ENCODE measurements at regions of chr3 and their contacts with region 1.

Region 1: GRCh38 chr3:194134757-194135528 is 1.0 kb upstream of the HES1 start:
- DNase-seq: peak; percentile 95 to 97 (median 96)
- ATAC-seq: peak; percentile 62 to 72 (median 68)
- H3K4me3 ChIP-seq: peak overlapping the region; percentile 16 to 72 (median 46)
- H3K27ac ChIP-seq: peak overlapping the region; percentile 95 to 98 (median 96)
- H3K4me1 ChIP-seq: peaks cover 15 to 29% (median 29%) of the 10 kb centered on the region in 3 donors
- H3K27me3 ChIP-seq: no peaks in the 10 kb centered on the region
- CTCF ChIP-seq: no peak

Region 2: DNA sequence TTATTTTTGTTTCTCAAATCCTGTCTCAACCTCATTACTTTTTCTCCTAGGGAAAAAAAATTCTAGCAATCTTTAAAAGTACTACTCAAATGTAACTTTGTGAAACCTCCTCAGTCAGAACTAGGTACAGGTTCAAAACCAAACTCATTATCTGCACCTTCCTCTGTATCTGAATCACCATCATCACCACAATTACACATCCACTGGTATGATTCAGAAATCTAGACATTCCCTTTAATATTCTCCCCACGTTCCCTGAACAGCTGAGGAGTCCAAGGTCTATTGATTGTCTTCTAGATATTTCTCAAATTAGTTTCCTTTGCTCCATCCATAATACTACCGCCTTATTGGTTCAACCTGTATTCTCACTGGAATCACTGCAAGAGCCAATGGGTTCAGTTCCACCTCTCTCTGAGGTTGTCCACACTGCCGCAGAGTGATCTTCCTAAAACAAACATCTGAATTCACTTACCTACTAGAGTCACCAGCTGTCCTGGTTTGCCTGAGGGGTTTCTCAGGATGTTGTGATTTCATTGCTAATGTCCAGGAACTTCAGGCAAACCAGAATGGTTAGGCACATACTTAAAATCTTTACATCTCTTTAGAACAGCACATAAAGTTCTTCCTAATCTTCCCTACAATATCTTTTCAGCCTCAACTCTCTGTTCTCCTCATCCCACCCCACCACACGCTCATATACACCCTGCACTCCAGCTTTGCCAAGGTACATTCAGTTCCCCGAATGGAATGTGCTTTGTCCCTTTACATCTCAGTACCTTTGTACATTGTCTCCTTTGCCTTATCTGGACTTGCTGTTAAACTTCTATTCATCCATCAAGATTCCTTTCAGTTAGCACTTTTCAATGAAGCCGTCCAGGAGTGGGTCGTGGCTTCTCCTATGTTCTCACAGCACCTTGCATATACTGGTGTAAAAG is 604.4 kb before region 1 on chr3:
- intact Hi-C with region 1: no loop called
- DNase-seq: no peak
- ATAC-seq: no peak
- H3K4me3 ChIP-seq: no peak overlapping the region
- H3K27ac ChIP-seq: no peak overlapping the region
- H3K4me1 ChIP-seq: no peaks in the 10 kb centered on the region
- H3K27me3 ChIP-seq: no peaks in the 10 kb centered on the region
- CTCF ChIP-seq: no peak

Region 3: GRCh38 chr3:193780810-193781472 is 354.0 kb before region 1 on chr3:
- intact Hi-C with region 1: loop called in 2 of 3 experiments (anchors 5 to 10 kb)
- DNase-seq: peak; percentile 53 to 82 (median 73)
- ATAC-seq: peak; percentile 82 to 94 (median 94)
- H3K4me3 ChIP-seq: no peak overlapping the region
- H3K27ac ChIP-seq: no peak overlapping the region
- H3K4me1 ChIP-seq: no peaks in the 10 kb centered on the region
- H3K27me3 ChIP-seq: no peaks in the 10 kb centered on the region
- CTCF ChIP-seq: peak; percentile 21 to 61 (median 60)

Region 4: GRCh38 chr3:193788189-193788991 is 346.6 kb before region 1 on chr3:
- intact Hi-C with region 1: loop called in 2 of 3 experiments (anchors 5 to 10 kb)
- DNase-seq: peak; percentile 47 to 73 (median 66)
- ATAC-seq: peak; percentile 78 to 95 (median 92)
- H3K4me3 ChIP-seq: no peak overlapping the region
- H3K27ac ChIP-seq: no peak overlapping the region
- H3K4me1 ChIP-seq: peaks cover 16 to 27% (median 23%) of the 10 kb centered on the region in 3 donors
- H3K27me3 ChIP-seq: no peaks in the 10 kb centered on the region
- CTCF ChIP-seq: peak; percentile 57 to 78 (median 65)

Region 5: DNA sequence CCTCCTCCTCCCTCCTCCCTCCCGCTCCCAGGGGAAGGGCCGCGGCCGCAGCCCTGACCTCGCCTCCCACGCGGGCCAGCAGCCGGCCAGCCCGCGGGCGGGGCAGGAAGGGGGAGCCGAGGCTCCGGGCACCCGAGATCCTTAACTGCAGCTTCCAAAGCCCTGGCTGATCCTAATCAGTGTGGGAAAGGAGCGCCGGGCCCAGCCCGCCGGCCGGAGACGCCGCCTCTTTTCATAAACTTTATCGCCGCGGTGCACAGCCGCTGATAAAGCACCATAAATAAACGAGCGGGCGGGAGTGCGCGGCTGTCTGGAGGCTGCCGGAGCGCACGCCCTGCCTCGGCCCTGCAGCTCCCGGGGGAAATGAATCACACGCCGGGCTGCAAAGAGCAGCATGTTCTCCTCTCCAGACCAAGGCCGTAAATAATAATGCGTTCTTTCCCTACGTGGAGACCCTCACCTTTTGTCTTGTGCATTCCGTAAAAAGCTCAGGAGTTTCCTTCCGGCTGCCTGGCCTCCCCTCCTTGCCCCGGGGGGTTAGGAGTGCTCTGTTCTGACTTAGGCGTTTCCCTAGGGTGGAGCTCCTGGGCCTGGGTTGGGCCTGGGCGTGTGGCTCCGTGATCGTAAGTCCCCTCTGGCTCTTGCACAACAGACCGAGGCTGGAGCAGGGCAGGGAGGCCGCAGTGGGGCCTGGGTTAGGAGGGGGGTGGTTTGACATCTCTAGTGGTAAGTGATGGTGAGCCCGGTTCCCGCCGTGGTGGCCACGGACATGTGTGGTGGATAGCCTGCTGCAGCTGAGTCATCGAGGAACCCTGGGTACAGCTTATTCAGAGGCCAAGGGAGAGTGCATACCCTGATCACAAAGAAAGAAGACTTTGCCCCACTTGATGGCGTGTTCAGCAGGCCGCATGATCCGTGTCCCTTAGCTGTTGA is 131.6 kb before region 1 on chr3:
- intact Hi-C with region 1: loop called in 1 of 3 experiments (anchors 10 kb)
- DNase-seq: peak; percentile 82 to 88 (median 85)
- ATAC-seq: peak; percentile 85 to 91 (median 87)
- H3K4me3 ChIP-seq: peak overlapping the region in 3 of 4 donors; percentile 6 to 42 (median 30)
- H3K27ac ChIP-seq: peak overlapping the region; percentile 66 to 86 (median 70)
- H3K4me1 ChIP-seq: peaks cover 19 to 25% (median 22%) of the 10 kb centered on the region in 3 donors
- H3K27me3 ChIP-seq: no peaks in the 10 kb centered on the region
- CTCF ChIP-seq: no peak

Region 6: DNA sequence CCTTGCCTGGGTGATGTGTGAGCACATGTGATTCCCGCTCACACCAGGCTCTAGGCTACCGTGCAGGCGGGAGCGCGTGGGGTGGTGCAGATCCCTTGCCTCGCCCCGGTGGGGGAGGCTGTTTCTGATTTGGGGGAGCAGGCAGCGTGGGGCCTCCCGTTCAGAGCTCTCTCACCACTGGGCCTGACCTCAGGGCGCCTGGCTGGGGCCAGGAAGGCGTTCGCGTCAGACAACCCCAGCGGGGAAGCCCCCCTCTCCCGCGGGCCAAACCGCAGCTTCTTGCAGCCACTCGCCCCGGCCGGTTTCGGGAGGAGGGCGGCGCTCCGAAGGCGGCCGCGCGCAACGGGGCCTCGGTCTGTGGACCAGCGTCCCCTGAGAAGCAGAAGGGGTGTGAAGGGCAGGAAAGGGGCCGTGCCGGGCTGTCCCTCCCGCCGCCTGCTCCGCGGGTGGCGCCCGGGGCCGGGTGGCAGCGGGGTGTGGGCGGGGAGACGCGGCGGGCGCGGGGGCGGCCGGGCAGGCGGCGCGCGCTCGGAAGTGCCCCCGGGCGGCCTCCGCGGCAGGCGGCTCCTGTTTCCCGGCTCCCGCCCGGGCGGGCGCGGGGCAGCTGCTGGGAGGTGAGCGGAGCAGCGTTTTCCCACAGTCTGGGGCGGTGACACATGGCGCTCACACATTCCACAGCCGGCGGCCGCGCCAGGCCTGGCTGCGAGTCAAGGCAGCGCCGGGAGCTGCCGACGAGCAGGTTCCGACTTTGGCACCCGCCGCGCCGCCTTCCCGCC is 64.1 kb before region 1 on chr3:
- intact Hi-C with region 1: loop called in 1 of 3 experiments (anchors 10 kb)
- DNase-seq: peak; percentile 89 to 96 (median 95)
- ATAC-seq: peak; percentile 84 to 88 (median 85)
- H3K4me3 ChIP-seq: peak overlapping the region; percentile 25 to 47 (median 34)
- H3K27ac ChIP-seq: peak overlapping the region; percentile 89 to 99 (median 94)
- H3K4me1 ChIP-seq: peaks cover 20 to 25% (median 21%) of the 10 kb centered on the region in 3 donors
- H3K27me3 ChIP-seq: no peaks in the 10 kb centered on the region
- CTCF ChIP-seq: no peak

Region 7: DNA sequence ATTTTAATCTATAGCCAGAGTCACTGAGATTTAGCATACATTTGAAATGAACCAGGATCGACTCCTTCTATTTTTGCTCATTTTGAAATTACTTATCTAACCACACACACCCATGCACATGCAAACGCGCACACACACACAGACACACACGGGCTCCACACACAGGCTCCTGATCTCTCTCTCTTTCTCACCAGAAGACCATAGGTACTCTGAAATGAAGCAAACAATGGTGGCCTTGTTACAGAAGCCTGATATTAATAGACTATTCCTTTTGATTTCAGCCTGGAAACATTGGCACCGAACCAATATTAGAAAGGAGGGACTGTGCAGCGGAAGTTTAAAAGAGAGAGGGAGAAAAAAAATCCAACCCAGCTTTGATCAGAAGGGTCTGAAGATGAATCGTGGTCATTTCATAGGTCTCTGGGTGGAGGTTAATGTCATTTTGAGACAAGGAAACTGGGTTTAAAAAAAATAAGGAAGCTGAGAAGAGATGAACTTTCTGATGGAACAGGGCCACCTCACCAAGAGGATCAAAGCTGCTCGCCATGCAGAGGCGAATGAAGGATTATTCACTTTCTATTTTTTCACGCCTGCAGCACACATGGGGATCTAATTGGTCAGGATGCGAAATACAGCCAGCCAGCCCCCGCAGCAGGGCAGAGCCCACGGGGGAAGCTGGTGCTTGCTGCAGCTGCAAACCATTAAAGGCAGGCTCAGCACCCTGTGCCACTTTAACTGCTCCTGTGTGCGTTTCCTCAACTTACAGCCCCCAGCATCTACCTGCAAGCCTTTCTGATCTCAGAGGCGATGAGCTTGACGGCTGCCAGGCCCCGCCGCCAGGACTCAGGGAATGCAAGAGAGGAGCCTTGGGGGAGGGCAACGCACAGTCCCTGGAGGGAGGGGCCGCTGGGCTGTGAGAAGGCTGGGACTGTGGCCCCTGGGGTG is 89.8 kb after region 1 on chr3:
- intact Hi-C with region 1: no loop called
- DNase-seq: no peak
- ATAC-seq: peak; percentile 63 to 89 (median 76)
- H3K4me3 ChIP-seq: no peak overlapping the region
- H3K27ac ChIP-seq: peak overlapping the region in 2 of 4 donors; percentile 23 to 37
- H3K4me1 ChIP-seq: peaks cover 0 to 9% (median 0%) of the 10 kb centered on the region in 3 donors
- H3K27me3 ChIP-seq: no peaks in the 10 kb centered on the region
- CTCF ChIP-seq: no peak

Measured in pancreas (tissue), 10 donors.